ENCODE measurements at regions of chr15 and their contacts with region 1.

Region 1: GRCh38 chr15:55196458-55197361 is at the start of gene RSL24D1:
- DNase-seq: peak; percentile 99
- ATAC-seq: peak; percentile 99
- H3K4me3 ChIP-seq: peak within 1 kb of the TSS; percentile 80
- H3K27ac ChIP-seq: peak within 1 kb of the TSS; percentile 91
- H3K4me1 ChIP-seq: no peaks in the 10 kb centered on the region; the same call in 1 of the 2 replicates
- H3K27me3 ChIP-seq: no peaks in the 10 kb centered on the region
- CTCF ChIP-seq: peak; percentile 32; the same call in 1 of the 2 replicates
- POLR2A ChIP-seq: peak; percentile 85
- RAD21 ChIP-seq: no peak
- total RNA-seq, gene RSL24D1: 36.7 and 89.2 TPM in 2 replicates

Region 2: GRCh38 chr15:55344206-55344605 is 147.5 kb after region 1 on chr15:
- CTCF ChIA-PET with region 1: interaction called, 10 read pairs
- POLR2A ChIA-PET with region 1: no interaction called
- dilution Hi-C with region 1: no loop called
- in situ Hi-C with region 1: no loop called
- intact Hi-C with region 1: no loop called
- DNase-seq: no peak
- ATAC-seq: peak; percentile 62
- H3K4me3 ChIP-seq: no peak overlapping the region
- H3K27ac ChIP-seq: no peak overlapping the region
- H3K4me1 ChIP-seq: peaks cover 2% of the 10 kb centered on the region
- H3K27me3 ChIP-seq: no peaks in the 10 kb centered on the region
- CTCF ChIP-seq: no peak
- POLR2A ChIP-seq: no peak
- RAD21 ChIP-seq: no peak